Sigmoid colon (tissue), 7 donors: ENCODE measurements at regions of chr2 and their contacts with region 1.

Region 1: GRCh38 chr2:176079831-176080539 is 3.8 kb downstream of the EVX2 start:
- DNase-seq: no peak
- H3K4me3 ChIP-seq: peak overlapping the region; percentile 32 to 54 (median 50)
- H3K27ac ChIP-seq: peak overlapping the region in 3 of 4 donors; percentile 92 to 96 (median 94)
- H3K4me1 ChIP-seq: peaks cover 0 to 39% (median 21%) of the 10 kb centered on the region in 4 donors
- H3K27me3 ChIP-seq: peaks cover 47 to 98% (median 53%) of the 10 kb centered on the region in 3 donors
- CTCF ChIP-seq: peak; percentile 75 to 97 (median 82)
- EP300 ChIP-seq: no peak
- POLR2A ChIP-seq: no peak

Region 2: DNA sequence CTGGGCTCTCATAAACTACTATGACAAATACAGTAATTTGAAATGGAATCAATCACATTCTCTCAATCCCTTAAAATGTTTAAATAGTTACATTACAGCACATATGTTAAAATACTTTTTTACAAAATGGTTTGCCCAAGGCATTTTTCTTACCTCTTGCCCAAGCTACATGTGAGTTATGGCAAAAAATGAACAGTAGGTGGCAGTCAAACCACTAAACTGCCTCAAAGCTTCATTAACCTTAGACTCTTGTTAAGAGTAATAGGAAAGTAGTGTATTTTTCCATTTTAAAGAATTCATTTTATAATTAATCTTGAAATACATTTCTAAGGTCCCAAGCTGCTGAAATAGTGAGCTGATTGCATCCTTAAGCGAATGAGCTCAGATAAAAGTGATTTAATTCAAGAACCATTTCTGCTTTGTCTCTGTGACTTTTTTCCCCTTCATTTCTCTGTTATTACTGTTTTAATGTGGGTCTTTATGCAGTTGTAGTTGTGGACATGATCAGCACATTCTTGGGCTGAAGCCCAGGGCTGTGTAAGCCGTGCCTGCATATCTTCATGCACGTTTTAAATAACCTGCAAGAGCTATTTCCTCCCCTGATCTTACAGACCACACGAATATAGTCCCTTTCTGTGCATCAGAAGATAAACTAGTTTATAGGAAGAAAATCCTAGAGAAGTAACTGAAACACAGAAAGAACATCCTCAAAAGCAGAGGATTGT is 389.7 kb before region 1 on chr2:
- intact Hi-C with region 1: loop called (anchors 1 kb)
- DNase-seq: no peak
- H3K4me3 ChIP-seq: no peak overlapping the region
- H3K27ac ChIP-seq: peak overlapping the region in 2 of 4 donors; percentile 8 to 12
- H3K4me1 ChIP-seq: peaks cover 0 to 4% (median 2%) of the 10 kb centered on the region in 4 donors
- H3K27me3 ChIP-seq: no peaks in the 10 kb centered on the region
- CTCF ChIP-seq: peak; percentile 46 to 76 (median 74)
- EP300 ChIP-seq: no peak
- POLR2A ChIP-seq: no peak

Region 3: DNA sequence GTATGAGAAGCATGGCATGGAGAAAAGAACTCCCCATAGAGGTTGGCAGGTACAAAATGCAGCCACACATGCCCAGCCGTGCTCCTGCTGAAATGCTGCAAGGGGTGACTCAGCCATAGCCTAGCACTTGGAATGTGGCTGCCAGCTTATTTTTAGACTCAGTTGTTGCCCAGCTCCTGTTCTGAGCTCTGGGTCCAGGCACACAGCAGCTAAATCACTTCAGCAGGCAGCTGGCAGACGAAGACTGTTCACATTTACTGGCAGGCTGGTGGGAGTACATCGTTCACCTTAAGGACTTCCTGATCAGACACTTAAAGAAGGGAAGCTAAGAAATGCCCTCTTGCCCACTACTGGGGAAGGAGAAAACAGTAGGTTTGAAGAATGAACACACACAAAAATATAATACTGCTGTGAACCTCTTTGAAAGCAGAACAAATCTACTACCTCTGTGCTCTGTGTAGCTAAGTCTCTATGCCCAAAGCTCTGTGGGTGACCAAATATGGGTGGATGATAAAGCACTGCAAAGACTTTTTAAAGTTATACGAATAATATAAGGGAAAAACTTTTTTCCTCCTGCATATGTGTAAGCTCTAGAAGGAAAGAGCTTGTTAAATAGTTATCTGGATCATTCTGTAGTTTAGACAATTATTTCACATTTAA is 224.1 kb before region 1 on chr2:
- intact Hi-C with region 1: loop called (anchors 5 kb)
- DNase-seq: peak; percentile 85
- H3K4me3 ChIP-seq: peak overlapping the region in 1 of 4 donors; percentile 11
- H3K27ac ChIP-seq: peak overlapping the region; percentile 73 to 83 (median 78)
- H3K4me1 ChIP-seq: peaks cover 0 to 35% (median 14%) of the 10 kb centered on the region in 4 donors
- H3K27me3 ChIP-seq: no peaks in the 10 kb centered on the region
- CTCF ChIP-seq: no peak
- EP300 ChIP-seq: peak in 2 of 4 donors; percentile 9 to 51
- POLR2A ChIP-seq: no peak

Region 4: GRCh38 chr2:175941699-175942098 is 138.3 kb before region 1 on chr2:
- intact Hi-C with region 1: loop called (anchors 5 kb)
- DNase-seq: no peak
- H3K4me3 ChIP-seq: no peak overlapping the region
- H3K27ac ChIP-seq: no peak overlapping the region
- H3K4me1 ChIP-seq: peaks cover 0 to 12% (median 0%) of the 10 kb centered on the region in 4 donors
- H3K27me3 ChIP-seq: no peaks in the 10 kb centered on the region
- CTCF ChIP-seq: no peak
- EP300 ChIP-seq: no peak
- POLR2A ChIP-seq: no peak

Region 5: DNA sequence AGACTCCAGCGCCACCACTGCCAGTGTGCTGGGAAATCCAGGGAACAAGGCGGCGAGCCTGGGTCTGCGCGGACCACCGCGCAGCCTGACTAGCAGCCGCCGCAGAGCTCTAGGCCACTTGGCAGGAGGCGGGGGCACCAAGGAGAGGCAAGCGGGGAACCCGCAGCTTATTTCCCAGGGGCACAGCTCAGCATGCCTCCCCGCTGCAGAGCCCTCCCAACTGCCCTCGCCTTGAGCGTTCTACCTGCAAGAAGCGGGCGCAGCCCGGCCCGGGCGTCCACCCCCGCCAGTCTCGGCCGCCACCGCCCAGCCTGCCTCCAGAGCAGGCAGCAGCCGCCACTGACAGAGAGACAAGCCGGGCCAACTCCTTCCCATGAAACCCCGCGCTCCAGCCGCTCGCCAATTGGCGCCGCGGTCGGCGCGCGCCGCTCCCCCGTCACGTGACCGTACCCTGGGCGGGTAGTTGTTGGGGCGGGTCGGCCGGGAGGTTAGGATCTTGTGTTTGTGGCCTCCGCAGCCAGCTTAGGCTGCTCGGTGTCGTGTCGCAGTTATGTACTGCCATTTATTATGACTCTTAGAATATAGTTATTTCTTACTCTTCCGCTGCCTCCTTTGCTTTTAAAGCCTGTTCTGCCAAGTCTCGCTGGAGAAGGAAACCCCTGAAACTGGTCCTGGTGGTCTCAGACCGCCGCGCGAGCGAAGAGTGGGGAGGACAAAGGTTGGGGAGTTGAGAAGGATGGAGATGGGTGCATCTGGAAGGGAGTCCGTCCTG is 77.9 kb before region 1 on chr2 and contains the start of gene LNPK:
- intact Hi-C with region 1: loop called (anchors 1 kb)
- DNase-seq: peak; percentile 96
- H3K4me3 ChIP-seq: peak within 1 kb of the TSS; percentile 72 to 88 (median 77)
- H3K27ac ChIP-seq: peak within 1 kb of the TSS; percentile 84 to 91 (median 87)
- H3K4me1 ChIP-seq: peaks cover 0 to 40% (median 17%) of the 10 kb centered on the region in 4 donors
- H3K27me3 ChIP-seq: no peaks in the 10 kb centered on the region
- CTCF ChIP-seq: no peak
- EP300 ChIP-seq: peak in 1 of 4 donors; percentile 53
- POLR2A ChIP-seq: peak; percentile 84 to 93
- total RNA-seq, gene LNPK: 15.9 to 48.2 (median 37.1) TPM

Region 6: DNA sequence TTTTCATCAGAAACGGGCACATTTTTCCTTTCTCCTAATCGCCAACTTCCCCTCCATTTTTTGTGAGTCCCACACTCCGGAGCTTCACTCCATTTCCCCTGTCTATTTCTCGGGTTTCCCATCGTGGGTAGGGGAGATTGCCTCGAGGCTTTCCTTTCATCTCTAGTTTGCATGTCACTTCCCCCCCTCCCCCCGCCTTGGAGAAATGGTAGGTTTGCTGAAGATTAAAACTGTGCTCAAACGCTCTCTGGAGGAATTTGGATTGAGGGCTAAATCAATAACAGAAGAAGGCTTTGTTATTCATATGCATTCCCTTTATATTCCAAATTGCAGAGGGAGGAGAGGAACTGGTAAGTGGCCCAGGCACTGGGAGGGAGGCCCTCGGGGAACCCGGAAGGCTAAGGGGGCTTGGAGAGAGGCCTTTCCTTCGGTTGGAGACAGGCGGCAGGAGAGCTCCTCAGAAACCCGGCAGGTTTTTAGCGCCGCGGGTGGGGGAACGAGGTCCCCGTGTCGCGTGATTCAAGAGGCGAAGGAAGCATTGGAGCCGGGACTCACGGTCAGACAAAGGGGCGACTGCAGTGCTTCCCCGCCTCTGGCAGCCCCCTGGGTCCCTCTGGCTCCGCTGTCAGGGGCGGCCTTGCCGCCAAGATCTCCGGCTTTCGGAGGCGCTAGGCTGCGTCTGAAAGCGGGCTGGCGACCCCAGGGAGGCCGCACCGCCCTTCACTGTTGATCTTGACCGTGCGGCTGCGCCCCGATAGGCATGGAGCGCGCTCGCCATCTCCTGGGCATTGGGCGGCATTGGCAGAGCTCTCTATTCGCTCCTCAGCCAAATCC is 17.2 kb after region 1 on chr2:
- intact Hi-C with region 1: loop called (anchors 2 kb)
- DNase-seq: peak; percentile 92
- H3K4me3 ChIP-seq: peak overlapping the region; percentile 45 to 70 (median 68)
- H3K27ac ChIP-seq: peak overlapping the region in 3 of 4 donors; percentile 92 to 96 (median 94)
- H3K4me1 ChIP-seq: peaks cover 0 to 41% (median 34%) of the 10 kb centered on the region in 4 donors
- H3K27me3 ChIP-seq: peaks cover 0 to 98% (median 35%) of the 10 kb centered on the region in 3 donors
- CTCF ChIP-seq: peak; percentile 70 to 95 (median 88)
- EP300 ChIP-seq: no peak
- POLR2A ChIP-seq: no peak